ENCODE measurements at regions of chr6 and their contacts with region 1.

Region 1: DNA sequence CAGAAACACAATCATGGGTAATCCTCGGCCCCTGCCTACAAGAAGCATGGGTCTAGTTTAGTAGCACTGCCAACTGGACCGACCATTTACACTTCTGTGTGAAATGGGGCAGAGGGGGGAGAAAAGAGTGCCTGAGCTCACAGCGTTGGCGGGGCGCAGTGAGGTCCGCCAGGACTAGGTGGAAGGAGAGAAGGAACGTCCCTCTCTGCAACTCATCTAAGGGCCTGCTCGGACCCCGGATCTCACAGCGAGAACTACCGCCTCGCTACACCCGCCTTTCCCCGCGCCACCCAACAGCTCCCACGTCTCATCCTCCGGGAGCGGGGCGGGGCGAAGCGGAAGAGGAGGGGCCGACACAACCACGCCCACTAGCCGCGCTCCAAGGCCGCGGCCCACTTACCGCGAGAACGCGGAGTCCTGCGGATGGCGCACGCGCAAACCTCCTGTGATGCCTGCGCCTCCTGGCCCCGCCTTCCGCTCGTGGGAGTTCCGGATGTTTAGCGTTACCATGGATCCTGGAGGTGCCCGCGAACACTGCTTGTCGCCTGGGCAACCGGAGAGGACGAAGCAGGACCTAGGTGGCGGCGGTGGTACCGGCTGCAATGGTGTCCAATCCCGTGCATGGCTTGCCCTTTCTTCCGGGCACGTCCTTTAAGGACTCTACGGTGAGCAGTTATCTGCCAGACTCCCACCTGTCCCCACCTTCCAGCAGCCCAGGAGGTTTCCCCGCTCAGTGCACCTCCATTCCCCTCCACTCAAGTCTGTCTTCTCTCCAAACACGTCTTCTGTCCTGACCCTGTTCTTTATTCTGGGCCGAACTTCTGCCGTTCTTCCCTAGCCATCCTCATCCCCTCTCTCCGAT is at the start of gene EFHC1:
- DNase-seq: peak; percentile 92
- ATAC-seq: peak; percentile 93
- H3K4me3 ChIP-seq: peak within 1 kb of the TSS; percentile 83
- H3K27ac ChIP-seq: peak within 1 kb of the TSS; percentile 79
- H3K4me1 ChIP-seq: peaks cover 18% of the 10 kb centered on the region
- H3K27me3 ChIP-seq: no peaks in the 10 kb centered on the region
- CTCF ChIP-seq: no peak
- EP300 ChIP-seq: peak in 1 of 2 experiments; percentile 50; a peak in 1 of 4 replicates
- POLR2A ChIP-seq: peak; percentile 96
- RAD21 ChIP-seq: no peak
- polyA plus RNA-seq, gene EFHC1: 9.0 to 9.1 TPM

Region 2: GRCh38 chr6:52389626-52390360 is 30.2 kb before region 1 on chr6:
- CTCF ChIA-PET with region 1: interaction called, 13 read pairs
- POLR2A ChIA-PET with region 1: interaction called, 5 read pairs
- RAD21 ChIA-PET with region 1: interaction called, 14 read pairs
- SMC1A ChIA-PET with region 1: interaction called, 5 read pairs
- in situ Hi-C with region 1: no loop called
- intact Hi-C with region 1: no loop called
- DNase-seq: peak; percentile 87
- ATAC-seq: peak; percentile 78
- H3K4me3 ChIP-seq: peak overlapping the region; percentile 43; the same call in 1 of the 2 replicates
- H3K27ac ChIP-seq: peak overlapping the region; percentile 94
- H3K4me1 ChIP-seq: peaks cover 63% of the 10 kb centered on the region
- H3K27me3 ChIP-seq: no peaks in the 10 kb centered on the region
- CTCF ChIP-seq: no peak; a peak in 1 of 6 replicates
- EP300 ChIP-seq: peak; percentile 66 to 69; a peak in 2 of 4 replicates
- POLR2A ChIP-seq: no peak
- RAD21 ChIP-seq: peak; percentile 10; the same call in 1 of the 2 replicates

Region 3: DNA sequence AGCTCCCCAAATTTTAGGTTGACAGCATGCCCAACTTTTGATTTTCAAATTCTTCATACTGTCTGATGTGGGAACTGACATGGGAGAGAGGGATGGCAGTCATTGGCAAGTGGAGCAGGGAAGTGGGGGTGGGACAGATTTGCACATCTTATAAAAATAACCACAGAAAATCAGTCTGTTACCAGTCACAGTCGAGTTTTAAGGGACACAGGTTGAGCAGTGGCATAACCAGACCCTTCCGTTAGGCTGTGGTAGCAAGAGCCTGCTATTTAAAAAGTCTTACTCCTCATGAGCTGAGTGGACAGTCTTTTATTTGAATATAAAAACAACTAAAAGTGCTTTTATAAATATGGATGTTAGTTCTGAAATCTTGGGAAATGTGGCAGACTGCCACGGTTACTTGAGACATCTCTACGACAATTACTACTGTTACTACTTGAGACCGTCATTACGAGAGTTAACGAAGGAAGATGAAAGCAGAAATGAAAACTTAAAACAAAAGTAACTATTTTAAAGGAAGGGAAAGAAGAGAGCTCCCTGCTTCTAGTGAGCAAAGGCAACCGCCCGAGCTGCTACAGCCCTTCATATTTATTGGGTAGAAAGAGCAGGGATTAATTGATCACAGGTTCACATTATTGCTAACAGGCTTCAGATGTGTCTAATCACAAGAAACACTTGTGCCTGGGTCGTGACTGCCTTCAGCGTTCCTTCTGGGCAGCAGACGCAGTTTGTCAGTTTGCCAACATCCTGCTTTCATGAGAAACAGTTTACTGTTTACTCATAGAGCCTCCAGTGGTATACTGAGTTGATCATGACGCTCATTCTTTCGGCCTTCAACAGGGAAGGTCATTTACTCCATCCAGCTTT is 71.4 kb after region 1 on chr6:
- CTCF ChIA-PET with region 1: interaction called, 83 read pairs
- POLR2A ChIA-PET with region 1: interaction called, 35 read pairs
- RAD21 ChIA-PET with region 1: interaction called, 124 read pairs
- SMC1A ChIA-PET with region 1: interaction called, 249 read pairs
- in situ Hi-C with region 1: loop called (anchors 5 kb)
- intact Hi-C with region 1: no loop called
- DNase-seq: peak; percentile 58
- ATAC-seq: peak; percentile 74
- H3K4me3 ChIP-seq: peak overlapping the region; percentile 50; the same call in 1 of the 2 replicates
- H3K27ac ChIP-seq: peak overlapping the region; percentile 89
- H3K4me1 ChIP-seq: peaks cover 56% of the 10 kb centered on the region
- H3K27me3 ChIP-seq: no peaks in the 10 kb centered on the region
- CTCF ChIP-seq: no peak
- EP300 ChIP-seq: no peak; a peak in 1 of 4 replicates
- POLR2A ChIP-seq: no peak
- RAD21 ChIP-seq: no peak

Region 4: GRCh38 chr6:52577022-52577777 is 157.2 kb after region 1 on chr6 and contains the start of gene TRAM2:
- CTCF ChIA-PET with region 1: interaction called, 19 read pairs
- POLR2A ChIA-PET with region 1: interaction called, 3 read pairs
- RAD21 ChIA-PET with region 1: interaction called, 11 read pairs
- SMC1A ChIA-PET with region 1: interaction called, 10 read pairs
- in situ Hi-C with region 1: loop called (anchors 5 kb)
- intact Hi-C with region 1: loop called (anchors 2 kb)
- DNase-seq: no peak
- ATAC-seq: peak; percentile 73
- H3K4me3 ChIP-seq: peak within 1 kb of the TSS; percentile 81
- H3K27ac ChIP-seq: peak within 1 kb of the TSS; percentile 86
- H3K4me1 ChIP-seq: peaks cover 30% of the 10 kb centered on the region
- H3K27me3 ChIP-seq: no peaks in the 10 kb centered on the region
- CTCF ChIP-seq: no peak
- EP300 ChIP-seq: no peak
- POLR2A ChIP-seq: peak; percentile 83
- RAD21 ChIP-seq: no peak
- polyA plus RNA-seq, gene TRAM2: 2.5 TPM

Region 5: GRCh38 chr6:52605610-52606185 is 185.7 kb after region 1 on chr6:
- CTCF ChIA-PET with region 1: interaction called, 118 read pairs
- POLR2A ChIA-PET with region 1: interaction called, 6 read pairs
- RAD21 ChIA-PET with region 1: no interaction called
- SMC1A ChIA-PET with region 1: interaction called, 8 read pairs
- in situ Hi-C with region 1: no loop called
- intact Hi-C with region 1: no loop called
- DNase-seq: no peak
- ATAC-seq: no peak
- H3K4me3 ChIP-seq: no peak overlapping the region
- H3K27ac ChIP-seq: no peak overlapping the region
- H3K4me1 ChIP-seq: no peaks in the 10 kb centered on the region
- H3K27me3 ChIP-seq: no peaks in the 10 kb centered on the region
- CTCF ChIP-seq: no peak
- EP300 ChIP-seq: no peak
- POLR2A ChIP-seq: no peak
- RAD21 ChIP-seq: no peak

Region 6: DNA sequence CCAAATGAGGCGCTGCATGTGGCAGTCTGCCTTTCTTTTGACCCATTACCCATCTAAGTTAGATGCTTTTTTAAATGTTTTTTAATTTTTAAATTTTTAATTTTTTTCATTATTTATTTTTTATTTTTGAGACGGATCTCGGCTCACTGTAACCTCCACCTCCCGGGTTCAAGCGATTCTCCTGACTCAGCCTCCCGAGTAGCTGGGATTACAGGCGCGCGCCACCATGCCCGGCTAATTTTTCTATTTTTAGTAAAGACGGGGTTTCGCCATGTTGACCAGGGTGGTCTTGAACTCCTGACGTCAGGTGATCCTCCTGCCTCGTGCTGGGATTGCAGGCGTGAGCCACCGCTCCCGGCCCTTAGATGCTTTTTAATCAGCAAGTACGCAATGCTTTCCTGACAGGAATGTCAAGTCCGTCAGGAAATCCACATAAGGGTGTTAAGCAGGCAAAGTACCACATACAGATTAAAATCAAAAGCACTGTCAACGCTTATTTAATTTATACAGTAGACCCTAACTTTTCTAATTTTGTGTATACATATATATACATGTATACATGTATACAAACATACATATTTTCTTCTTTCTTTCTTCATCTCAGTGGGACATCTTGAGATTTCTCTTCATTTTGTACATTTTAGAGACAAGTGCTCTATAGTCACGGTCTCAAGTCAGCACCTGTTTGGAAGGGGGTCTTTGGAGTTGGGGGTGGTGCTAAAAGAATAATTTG is 576.0 kb after region 1 on chr6:
- CTCF ChIA-PET with region 1: no interaction called
- POLR2A ChIA-PET with region 1: no interaction called
- RAD21 ChIA-PET with region 1: no interaction called
- SMC1A ChIA-PET with region 1: no interaction called
- in situ Hi-C with region 1: no loop called
- intact Hi-C with region 1: loop called (anchors 10 kb)
- DNase-seq: peak; percentile 51
- ATAC-seq: peak; percentile 11
- H3K4me3 ChIP-seq: peak overlapping the region; percentile 65
- H3K27ac ChIP-seq: no peak overlapping the region
- H3K4me1 ChIP-seq: no peaks in the 10 kb centered on the region
- H3K27me3 ChIP-seq: no peaks in the 10 kb centered on the region
- CTCF ChIP-seq: no peak
- EP300 ChIP-seq: no peak
- POLR2A ChIP-seq: no peak
- RAD21 ChIP-seq: no peak

Region 7: GRCh38 chr6:53309059-53309900 is 889.2 kb after region 1 on chr6:
- CTCF ChIA-PET with region 1: no interaction called
- POLR2A ChIA-PET with region 1: no interaction called
- RAD21 ChIA-PET with region 1: no interaction called
- SMC1A ChIA-PET with region 1: no interaction called
- in situ Hi-C with region 1: no loop called
- intact Hi-C with region 1: no loop called
- DNase-seq: peak; percentile 42
- ATAC-seq: peak; percentile 58
- H3K4me3 ChIP-seq: no peak overlapping the region
- H3K27ac ChIP-seq: peak overlapping the region; percentile 10
- H3K4me1 ChIP-seq: peaks cover 39% of the 10 kb centered on the region
- H3K27me3 ChIP-seq: no peaks in the 10 kb centered on the region
- CTCF ChIP-seq: no peak
- EP300 ChIP-seq: peak in 1 of 2 experiments; percentile 19; a peak in 1 of 4 replicates
- POLR2A ChIP-seq: peak; percentile 28; the same call in 1 of the 2 replicates
- RAD21 ChIP-seq: no peak

Measured in GM12878 (cell line).